Panc1 (cell line): ENCODE measurements at regions of chr2 and their contacts with region 1.

Region 1: GRCh38 chr2:101805152-101806088 is 107.9 kb downstream of the MAP4K4 start:
- DNase-seq: no peak
- ATAC-seq: no peak; the same call in 1 of the 2 replicates
- H3K4me3 ChIP-seq: no peak overlapping the region
- H3K27ac ChIP-seq: no peak overlapping the region
- H3K4me1 ChIP-seq: peaks cover 8% of the 10 kb centered on the region
- H3K27me3 ChIP-seq: no peaks in the 10 kb centered on the region
- CTCF ChIP-seq: no peak

Region 2: GRCh38 chr2:101770726-101771125 is 34.7 kb before region 1 on chr2:
- CTCF ChIA-PET with region 1: no interaction called
- POLR2A ChIA-PET with region 1: interaction called, 12 read pairs
- in situ Hi-C with region 1: no loop called
- intact Hi-C with region 1: no loop called
- DNase-seq: no peak
- ATAC-seq: peak; percentile 80
- H3K4me3 ChIP-seq: no peak overlapping the region
- H3K27ac ChIP-seq: no peak overlapping the region
- H3K4me1 ChIP-seq: peaks cover 31% of the 10 kb centered on the region
- H3K27me3 ChIP-seq: no peaks in the 10 kb centered on the region
- CTCF ChIP-seq: peak; percentile 78